ENCODE measurements at regions of chr1 and their contacts with region 1.

Region 1: DNA sequence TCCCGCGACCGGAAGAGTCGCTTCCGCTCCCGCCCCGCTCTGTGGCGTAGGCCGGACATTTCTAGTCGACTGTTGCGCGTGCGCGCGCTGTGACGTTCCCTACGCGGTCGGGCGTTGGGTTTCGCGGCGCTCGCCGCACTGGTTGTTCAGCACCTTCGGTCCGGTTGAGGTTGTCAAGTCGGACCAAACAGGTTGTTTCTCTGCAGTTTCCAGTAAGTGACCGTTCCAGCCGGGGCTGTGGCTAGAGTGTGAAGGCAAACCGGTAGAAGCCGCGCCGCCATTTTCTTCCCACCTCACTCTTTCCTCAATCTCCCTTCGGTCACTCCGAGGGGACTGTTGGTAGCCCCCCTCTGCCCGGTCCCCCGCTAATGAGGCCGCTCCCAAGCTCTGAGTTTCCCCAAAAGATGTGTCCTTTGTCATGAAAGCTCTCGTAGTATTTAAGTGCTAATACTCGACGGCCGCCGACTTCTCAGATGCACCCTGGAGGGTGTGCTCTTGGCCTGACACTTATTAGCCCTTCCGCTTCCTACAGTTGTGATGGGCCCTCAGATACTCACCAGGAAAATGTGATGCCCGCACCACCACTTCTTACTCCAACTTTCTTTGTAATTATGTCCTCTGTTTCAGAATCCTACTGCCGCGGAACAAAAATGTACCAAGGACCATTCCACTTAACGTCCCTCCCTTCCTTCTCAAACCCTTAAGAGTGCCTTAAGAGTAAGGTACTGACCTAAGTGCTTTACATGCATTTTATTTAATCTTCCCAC is 56.3 kb downstream of the TRAF5 start:
- DNase-seq: peak; percentile 76
- ATAC-seq: peak; percentile 100
- H3K4me3 ChIP-seq: peak overlapping the region; percentile 76 to 81
- H3K27ac ChIP-seq: peak overlapping the region; percentile 96
- H3K4me1 ChIP-seq: 0 out of 2 replicates have a peak, but pooled peaks cover 6% of the 10 kb centered on the region
- H3K27me3 ChIP-seq: no peaks in the 10 kb centered on the region
- CTCF ChIP-seq: no peak

Region 2: DNA sequence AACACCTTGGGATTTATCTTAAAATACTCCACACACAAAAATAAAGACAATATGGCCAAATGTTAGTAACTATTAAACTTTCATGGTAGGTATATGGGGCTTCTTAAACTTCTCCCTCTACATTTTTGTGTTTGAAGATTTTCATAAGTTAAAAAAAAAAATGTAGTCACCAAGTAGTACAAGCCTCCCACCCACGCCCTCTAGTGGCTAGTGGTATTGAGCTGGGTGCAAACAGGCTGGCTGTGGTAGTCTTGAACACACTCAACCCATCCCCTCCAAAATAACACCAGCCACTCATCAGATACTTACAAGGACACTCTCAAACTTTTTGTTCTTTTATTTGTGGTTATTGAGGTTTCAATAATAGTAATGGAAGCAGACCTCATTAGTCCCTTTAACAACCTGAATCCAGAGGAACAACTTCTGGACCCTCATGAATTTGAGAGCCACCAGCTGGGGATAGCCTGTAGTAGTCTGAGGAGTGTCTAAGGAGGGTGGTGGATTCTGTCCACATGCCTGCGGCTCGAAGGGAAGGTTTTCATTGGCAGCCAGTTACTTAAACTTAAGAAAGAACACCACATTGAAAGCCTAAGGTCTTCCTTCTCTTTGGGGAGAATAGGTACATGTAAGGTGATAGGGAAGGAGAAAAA is 93.4 kb after region 1 on chr1:
- CTCF ChIA-PET with region 1: interaction called, 10 read pairs
- POLR2A ChIA-PET with region 1: no interaction called
- in situ Hi-C with region 1: no loop called
- intact Hi-C with region 1: no loop called
- DNase-seq: peak; percentile 50
- ATAC-seq: peak; percentile 92
- H3K4me3 ChIP-seq: no peak overlapping the region
- H3K27ac ChIP-seq: no peak overlapping the region
- H3K4me1 ChIP-seq: no peaks in the 10 kb centered on the region
- H3K27me3 ChIP-seq: peaks cover 3% of the 10 kb centered on the region; the same call in 1 of the 2 replicates
- CTCF ChIP-seq: peak; percentile 94